ENCODE measurements at regions of chr10 and their contacts with region 1.

Region 1: DNA sequence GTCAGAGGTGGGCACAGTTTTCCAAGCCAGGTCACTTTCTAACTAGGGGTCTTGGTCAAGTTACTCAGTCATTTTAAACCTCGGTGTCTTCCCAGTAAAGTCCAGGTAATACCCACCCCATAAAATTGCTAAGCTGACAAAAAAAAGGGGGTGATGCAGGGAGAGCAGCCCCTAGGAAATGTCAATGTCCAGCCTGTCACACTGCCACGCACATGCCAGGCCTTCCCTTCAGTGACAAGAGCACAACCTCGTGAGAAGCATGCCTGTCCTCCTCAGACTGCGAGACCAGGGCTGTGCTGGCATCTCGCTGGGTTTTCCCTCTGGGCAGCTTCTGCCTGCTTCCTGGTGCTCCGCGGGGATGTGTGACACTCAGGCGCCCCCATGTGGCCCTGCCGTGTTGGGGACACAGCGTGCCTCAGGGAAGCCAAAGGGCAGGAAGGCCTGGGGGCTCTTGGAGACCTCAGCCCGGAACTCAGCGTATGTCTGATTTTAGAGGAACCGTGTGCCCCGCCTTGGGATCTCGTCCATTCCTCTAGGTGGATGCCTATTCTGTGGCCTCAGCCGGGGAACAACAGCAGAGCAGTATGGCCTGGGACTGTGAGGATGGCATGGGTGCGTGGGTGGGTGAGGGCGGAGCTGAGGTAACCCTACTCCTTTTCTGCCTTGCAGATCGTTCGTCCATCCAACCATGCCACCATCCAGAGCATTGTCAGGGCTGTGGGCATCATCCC is 10.2 kb upstream of the GDF2 start:
- DNase-seq: peak; percentile 87
- H3K4me3 Mint-ChIP-seq: no peak overlapping the region
- H3K27ac Mint-ChIP-seq: peak overlapping the region; percentile 92
- H3K4me1 Mint-ChIP-seq: peaks cover 24% of the 10 kb centered on the region
- H3K27me3 Mint-ChIP-seq: no peaks in the 10 kb centered on the region

Region 2: DNA sequence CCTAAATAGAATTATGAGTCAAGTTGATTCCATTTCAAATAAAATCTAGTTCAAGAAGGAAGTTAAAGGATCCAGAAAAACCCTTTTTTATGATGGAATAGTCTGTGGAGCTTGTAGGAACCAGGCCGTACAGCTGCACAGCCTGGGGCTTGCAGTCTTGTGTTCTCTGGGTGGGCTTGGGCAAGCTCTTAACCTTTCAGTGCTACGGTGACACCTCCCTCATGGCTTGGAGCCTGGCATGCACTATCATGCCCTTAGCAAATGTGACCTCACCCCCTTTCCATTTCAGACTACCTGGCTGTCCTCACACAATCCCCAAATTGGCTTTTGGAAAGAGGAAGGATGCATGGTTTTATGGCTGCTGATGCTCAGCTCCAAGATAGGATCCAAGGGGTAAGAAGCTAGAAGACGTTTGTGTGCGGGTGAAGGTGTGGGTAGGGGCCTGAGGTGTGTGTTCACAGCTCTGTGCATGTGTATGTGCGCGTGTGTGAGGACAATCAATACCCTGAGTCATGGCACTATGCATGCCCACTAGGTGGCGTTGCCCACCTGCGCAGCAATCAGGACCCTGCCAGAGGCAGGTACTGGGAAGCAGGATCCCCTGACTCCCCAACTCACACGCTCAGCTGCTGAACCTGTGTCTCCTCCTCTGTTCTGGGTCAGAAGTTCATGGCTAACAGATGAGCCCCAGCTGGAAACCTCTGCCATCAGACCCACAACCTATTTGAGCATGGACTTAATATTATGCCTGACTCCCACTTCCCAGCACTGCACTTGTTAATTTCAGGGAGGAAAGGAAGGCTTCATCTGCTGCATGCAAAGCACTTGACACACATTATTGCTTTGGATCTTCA is 287.5 kb before region 1 on chr10:
- CTCF ChIA-PET with region 1: interaction called, 20 read pairs
- POLR2A ChIA-PET with region 1: no interaction called
- DNase-seq: peak; percentile 70
- H3K4me3 Mint-ChIP-seq: no peak overlapping the region
- H3K27ac Mint-ChIP-seq: no peak overlapping the region
- H3K4me1 Mint-ChIP-seq: peaks cover 3% of the 10 kb centered on the region
- H3K27me3 Mint-ChIP-seq: no peaks in the 10 kb centered on the region

Region 3: DNA sequence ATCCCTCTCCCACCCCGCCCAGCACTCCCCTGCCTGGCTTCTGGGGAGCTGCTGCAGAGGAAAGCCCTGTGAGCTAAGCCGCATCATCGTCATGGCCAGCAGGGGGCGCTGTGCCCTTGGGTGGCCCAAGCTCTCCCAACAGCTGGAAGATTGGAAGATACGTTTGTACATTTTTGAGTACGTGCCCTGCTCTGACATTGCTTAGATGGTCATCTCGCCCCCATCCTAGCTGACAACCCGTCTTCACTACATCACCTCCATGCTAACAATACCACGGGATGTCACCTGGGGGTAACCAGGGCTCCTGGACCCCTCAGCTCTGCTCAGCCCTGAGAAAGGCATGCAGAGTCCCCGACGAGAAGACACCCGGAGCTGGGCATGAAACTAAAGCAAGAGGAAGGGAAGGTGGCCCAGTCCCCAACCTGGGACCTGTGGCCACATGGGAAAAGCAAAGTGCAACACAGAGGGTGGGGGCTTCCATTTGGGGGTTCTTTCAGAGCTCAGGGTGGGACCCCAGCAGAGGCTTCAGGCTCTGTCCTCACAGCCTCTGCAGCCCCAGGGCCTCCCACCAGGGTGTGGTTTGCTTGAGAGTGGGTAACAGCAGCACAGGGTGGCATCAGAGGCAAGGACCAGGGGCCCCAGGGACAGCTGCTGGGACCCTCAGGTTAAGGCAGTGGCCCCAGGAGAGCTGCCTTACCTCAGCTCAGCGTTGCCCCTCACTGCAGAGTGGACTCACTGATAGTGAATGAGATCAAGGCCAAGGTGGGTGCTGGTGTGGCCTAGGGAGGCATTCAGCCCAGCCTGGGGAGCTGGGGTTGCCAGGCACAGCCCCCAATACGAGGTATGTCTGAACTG is 264.2 kb before region 1 on chr10:
- CTCF ChIA-PET with region 1: interaction called, 35 read pairs
- POLR2A ChIA-PET with region 1: no interaction called
- DNase-seq: peak; percentile 79
- H3K4me3 Mint-ChIP-seq: no peak overlapping the region
- H3K27ac Mint-ChIP-seq: peak overlapping the region; percentile 63
- H3K4me1 Mint-ChIP-seq: peaks cover 12% of the 10 kb centered on the region
- H3K27me3 Mint-ChIP-seq: no peaks in the 10 kb centered on the region

Region 4: GRCh38 chr10:47322300-47323061 is 10.4 kb after region 1 on chr10 and contains the start of gene GDF2:
- CTCF ChIA-PET with region 1: interaction called, 10 read pairs
- POLR2A ChIA-PET with region 1: no interaction called
- DNase-seq: no peak
- H3K4me3 Mint-ChIP-seq: no peak within 1 kb of the TSS
- H3K27ac Mint-ChIP-seq: no peak within 1 kb of the TSS
- H3K4me1 Mint-ChIP-seq: no peaks in the 10 kb centered on the region
- H3K27me3 Mint-ChIP-seq: no peaks in the 10 kb centered on the region
- total RNA-seq, gene GDF2: not detected

Measured in activated CD4-positive, alpha-beta T cell treated with anti-CD3 and anti-CD28 coated beads, Interleukin-2, amount 10 ng/mL, durations not matched to agents 7 days and 5 days (primary cell).